ENCODE measurements at regions of chr14 and their contacts with region 1.

Region 1: GRCh38 chr14:77028384-77029231 is at the start of gene IRF2BPL:
- DNase-seq: peak; percentile 99
- ATAC-seq: peak; percentile 67 to 77 (median 70)
- H3K4me3 ChIP-seq: peak within 1 kb of the TSS; percentile 91
- H3K27ac ChIP-seq: peak within 1 kb of the TSS; percentile 100
- H3K4me1 ChIP-seq: peaks cover 57% of the 10 kb centered on the region
- H3K27me3 ChIP-seq: no peaks in the 10 kb centered on the region
- CTCF ChIP-seq: no peak
- total RNA-seq, gene IRF2BPL: 9.7 to 26.3 (median 21.7) TPM

Region 2: GRCh38 chr14:76918751-76919543 is 109.7 kb before region 1 on chr14:
- intact Hi-C with region 1: loop called (anchors 1 to 10 kb)
- DNase-seq: peak; percentile 97 to 99
- ATAC-seq: peak; percentile 85 to 92 (median 88)
- H3K4me3 ChIP-seq: peak overlapping the region; percentile 50
- H3K27ac ChIP-seq: peak overlapping the region; percentile 91
- H3K4me1 ChIP-seq: peaks cover 55% of the 10 kb centered on the region
- H3K27me3 ChIP-seq: no peaks in the 10 kb centered on the region
- CTCF ChIP-seq: no peak

Region 3: GRCh38 chr14:76956316-76957090 is 72.1 kb before region 1 on chr14:
- intact Hi-C with region 1: loop called (anchors 2 to 5 kb)
- DNase-seq: peak; percentile 90 to 92
- ATAC-seq: peak; percentile 74 to 78 (median 76)
- H3K4me3 ChIP-seq: peak overlapping the region; percentile 62
- H3K27ac ChIP-seq: peak overlapping the region; percentile 99
- H3K4me1 ChIP-seq: peaks cover 53% of the 10 kb centered on the region
- H3K27me3 ChIP-seq: no peaks in the 10 kb centered on the region
- CTCF ChIP-seq: no peak

Region 4: GRCh38 chr14:77067632-77068514 is 39.3 kb after region 1 on chr14:
- intact Hi-C with region 1: loop called in 1 of 2 experiments (anchors 5 kb)
- DNase-seq: peak; percentile 63 to 86
- ATAC-seq: peak; percentile 84 to 91 (median 88)
- H3K4me3 ChIP-seq: no peak overlapping the region
- H3K27ac ChIP-seq: no peak overlapping the region
- H3K4me1 ChIP-seq: peaks cover 24% of the 10 kb centered on the region
- H3K27me3 ChIP-seq: no peaks in the 10 kb centered on the region
- CTCF ChIP-seq: peak; percentile 93